Esophagus muscularis mucosa (tissue), 4 donors: ENCODE measurements at regions of chr4 and their contacts with region 1.

Region 1: DNA sequence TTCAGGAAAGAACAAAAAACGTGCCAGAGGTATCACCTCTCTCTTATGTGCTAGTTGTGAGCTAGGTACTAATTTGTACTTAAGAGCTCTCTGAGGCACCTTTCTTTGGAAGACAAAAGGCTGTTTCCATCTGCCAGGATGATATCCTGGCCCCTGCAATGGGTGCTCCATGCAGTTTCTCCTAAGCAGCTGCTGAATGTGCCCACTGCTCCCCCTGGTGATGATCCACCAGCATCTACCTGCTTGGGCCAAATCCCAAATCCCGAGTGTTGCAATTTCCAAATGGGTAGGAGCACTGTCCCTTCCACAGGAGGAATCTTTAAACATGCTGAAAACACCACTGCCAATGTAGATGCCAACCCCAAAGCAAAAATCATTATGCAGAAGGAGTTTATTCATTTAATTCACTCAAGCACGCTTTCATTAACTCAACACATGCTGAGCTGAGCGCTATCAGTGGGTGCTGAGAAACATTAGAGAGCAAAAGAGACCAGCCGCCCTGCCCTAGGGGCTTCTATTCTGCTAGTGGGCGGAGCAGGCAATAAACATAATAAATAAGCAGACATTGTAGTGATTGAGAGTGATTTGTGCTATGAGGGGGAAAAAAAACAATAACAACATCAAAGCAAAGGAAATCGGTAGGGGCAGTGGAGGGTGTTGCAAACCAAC is 69.6 kb upstream of the C4orf50 start:
- DNase-seq: no peak
- H3K4me3 ChIP-seq: no peak overlapping the region
- H3K27ac ChIP-seq: no peak overlapping the region
- H3K4me1 ChIP-seq: no peaks in the 10 kb centered on the region
- H3K27me3 ChIP-seq: peaks cover 0 to 27% (median 0%) of the 10 kb centered on the region in 4 donors
- CTCF ChIP-seq: peak; percentile 35 to 58 (median 43)
- EP300 ChIP-seq: no peak
- POLR2A ChIP-seq: no peak

Region 2: DNA sequence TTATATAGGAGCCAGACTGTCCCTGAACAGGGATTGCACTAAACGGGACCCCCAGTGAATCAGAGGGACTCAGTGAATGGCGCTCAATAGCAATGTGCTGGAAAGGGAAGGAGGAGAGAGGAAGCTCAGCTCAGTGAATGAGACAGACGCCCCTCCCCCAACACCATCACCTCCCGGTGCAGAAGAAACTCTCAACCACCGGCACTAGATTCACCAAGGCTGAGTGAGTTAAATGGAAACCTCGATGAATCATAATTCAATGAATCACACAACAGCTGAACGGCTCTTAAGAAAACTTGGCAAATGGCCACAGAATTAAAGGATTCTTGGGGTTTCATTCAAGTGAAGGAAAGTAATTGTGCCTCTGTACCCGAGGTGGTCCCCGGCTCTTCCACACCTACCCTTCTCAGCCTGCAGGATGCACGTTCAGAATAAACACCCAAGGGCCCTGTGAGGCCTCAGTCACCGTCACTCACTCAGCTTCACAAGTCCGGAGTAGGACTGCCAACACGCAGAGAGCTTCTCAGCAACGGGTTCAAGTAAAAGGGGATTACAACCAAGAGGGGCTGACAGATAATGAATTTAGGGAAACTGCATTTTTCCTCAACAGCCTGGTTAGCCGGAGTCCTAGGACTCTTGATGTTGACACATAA is 224.2 kb before region 1 on chr4:
- intact Hi-C with region 1: no loop called
- DNase-seq: no peak
- H3K4me3 ChIP-seq: no peak overlapping the region
- H3K27ac ChIP-seq: no peak overlapping the region
- H3K4me1 ChIP-seq: no peaks in the 10 kb centered on the region
- H3K27me3 ChIP-seq: peaks cover 0 to 30% (median 0%) of the 10 kb centered on the region in 4 donors
- CTCF ChIP-seq: no peak
- EP300 ChIP-seq: no peak
- POLR2A ChIP-seq: no peak

Region 3: DNA sequence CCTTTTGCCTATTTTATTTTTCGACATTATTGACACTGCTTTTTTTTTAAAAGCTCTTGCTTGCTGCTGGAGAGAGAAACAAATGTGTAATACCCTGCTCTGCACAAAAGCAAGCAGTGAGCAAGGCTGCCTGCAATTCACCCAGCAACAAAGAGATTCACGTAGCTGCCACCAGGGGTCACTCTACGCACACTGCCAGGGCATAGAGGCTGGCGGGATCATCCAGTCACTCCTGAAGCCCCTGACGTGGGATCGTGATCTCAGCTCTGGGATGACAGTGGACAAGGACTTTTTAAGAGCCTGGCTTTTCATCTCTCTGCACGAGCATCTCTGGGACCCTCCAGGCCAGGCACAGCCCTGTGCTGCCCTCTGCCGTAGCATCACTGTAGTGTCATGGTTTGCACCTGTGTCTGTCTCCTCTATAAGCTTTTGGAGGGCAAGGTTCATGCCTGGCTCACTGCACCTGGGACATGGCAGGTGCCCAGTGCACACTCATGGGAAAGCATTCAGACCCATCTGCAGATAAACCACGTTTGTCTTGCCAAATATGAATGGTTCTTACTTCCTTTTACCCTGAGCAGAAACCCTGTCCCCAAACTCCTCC is 89.4 kb before region 1 on chr4:
- intact Hi-C with region 1: loop called (anchors 10 kb)
- DNase-seq: no peak
- H3K4me3 ChIP-seq: no peak overlapping the region
- H3K27ac ChIP-seq: no peak overlapping the region
- H3K4me1 ChIP-seq: peaks cover 0 to 3% (median 0%) of the 10 kb centered on the region in 4 donors
- H3K27me3 ChIP-seq: peaks cover 0 to 49% (median 0%) of the 10 kb centered on the region in 4 donors
- CTCF ChIP-seq: peak; percentile 70 to 90 (median 83)
- EP300 ChIP-seq: no peak
- POLR2A ChIP-seq: no peak